ENCODE measurements at regions of chr12 and their contacts with region 1.

Region 1: DNA sequence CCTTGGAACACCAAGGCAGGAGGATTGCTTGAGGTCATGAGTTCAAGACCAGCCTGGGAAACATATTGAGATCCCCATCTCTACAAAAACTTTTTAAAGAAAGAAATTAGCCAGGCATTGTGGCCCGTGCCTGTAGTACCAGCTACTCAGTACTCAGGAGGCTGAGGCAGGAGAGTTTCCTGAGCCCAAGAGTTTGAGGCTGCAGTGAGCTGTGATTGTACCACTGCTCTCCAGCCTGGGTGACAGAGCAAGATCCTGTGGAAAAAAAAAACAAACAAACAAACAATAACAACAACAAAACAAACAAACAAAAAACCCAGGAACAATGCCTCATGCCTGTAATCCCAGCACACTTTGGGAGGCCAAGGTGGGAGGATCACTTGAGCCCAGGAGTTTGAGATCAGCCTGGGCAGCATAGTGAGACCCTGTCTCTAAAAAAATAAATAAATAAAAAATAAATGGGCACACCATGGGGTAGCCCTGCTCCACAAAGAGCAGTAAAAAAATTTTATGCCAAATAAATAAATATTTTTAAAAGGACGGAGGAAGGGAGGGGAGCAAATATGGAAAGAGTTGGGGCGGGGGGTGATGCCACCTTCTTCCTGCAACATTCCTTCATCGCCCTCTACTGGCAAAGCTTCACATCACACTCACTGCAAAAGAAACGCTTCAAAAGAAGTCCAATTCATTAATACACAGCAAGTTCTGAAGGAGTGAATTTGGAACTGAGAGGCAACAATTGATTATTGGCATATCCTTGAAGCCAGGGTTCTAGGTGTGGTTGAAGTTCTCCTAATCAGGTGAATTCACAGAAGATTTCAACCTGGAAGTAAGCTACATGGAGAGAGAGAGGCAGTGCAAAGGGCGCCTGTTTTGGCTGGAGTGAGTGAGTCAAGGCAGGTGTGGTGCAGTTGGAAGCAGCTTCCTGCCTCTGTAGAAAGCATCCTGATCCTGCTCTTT is 8.8 kb upstream of the GNPTAB start:
- DNase-seq: peak in 6 of 10 donors; percentile 34 to 82 (median 66)

Region 2: GRCh38 chr12:101414533-101415119 is 425.0 kb before region 1 on chr12:
- intact Hi-C with region 1: loop called (anchors 5 kb)
- DNase-seq: peak in 1 of 10 donors; percentile 18

Region 3: DNA sequence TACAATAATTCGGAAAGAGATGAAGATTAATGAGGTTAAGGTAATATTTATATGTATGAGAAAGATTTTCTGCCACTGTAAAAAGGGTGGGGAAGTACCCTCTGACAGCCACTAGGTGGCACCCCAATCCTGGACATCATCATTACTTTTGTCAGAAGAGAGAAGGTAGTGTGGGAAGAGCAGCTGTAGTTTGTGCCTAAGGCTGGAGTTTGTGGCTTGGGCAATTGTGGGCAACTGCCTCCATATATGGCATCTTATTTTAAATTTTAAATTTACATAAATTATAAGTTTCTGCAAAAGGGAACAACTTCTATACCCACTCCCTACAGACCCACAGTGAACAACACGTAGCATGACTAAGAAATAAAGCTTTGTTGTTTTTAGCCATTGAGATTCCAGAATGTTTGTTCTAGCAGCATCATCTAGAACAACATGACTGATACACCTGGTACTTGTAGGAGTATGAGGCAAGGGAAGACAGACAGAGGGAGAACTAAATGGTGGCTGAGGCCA is 65.9 kb before region 1 on chr12:
- intact Hi-C with region 1: loop called (anchors 2 kb)
- DNase-seq: peak in 7 of 10 donors; percentile 30 to 90 (median 62)